SK-N-SH (cell line): ENCODE measurements at regions of chr18 and their contacts with region 1.

Region 1: GRCh38 chr18:52903857-52904256 is 563.9 kb downstream of the DCC start:
- DNase-seq: peak; percentile 38
- H3K4me3 ChIP-seq: peak overlapping the region in 1 of 2 experiments; percentile 47; a peak in 1 of 4 replicates
- H3K27ac ChIP-seq: no peak overlapping the region
- H3K4me1 ChIP-seq: no peaks in the 10 kb centered on the region
- H3K27me3 ChIP-seq: no peaks in the 10 kb centered on the region
- CTCF ChIP-seq: peak; percentile 54
- EP300 ChIP-seq: no peak
- RAD21 ChIP-seq: peak; percentile 83

Region 2: GRCh38 chr18:52888014-52888413 is 15.8 kb before region 1 on chr18:
- CTCF ChIA-PET with region 1: interaction called, 19 read pairs
- POLR2A ChIA-PET with region 1: no interaction called
- DNase-seq: no peak
- H3K4me3 ChIP-seq: no peak overlapping the region
- H3K27ac ChIP-seq: no peak overlapping the region
- H3K4me1 ChIP-seq: peaks cover 3 to 9% of the 10 kb centered on the region in 2 experiments; a peak in 3 of 4 replicates
- H3K27me3 ChIP-seq: no peaks in the 10 kb centered on the region
- CTCF ChIP-seq: no peak
- EP300 ChIP-seq: no peak
- RAD21 ChIP-seq: no peak